ENCODE measurements at regions of chr5 and their contacts with region 1.

Region 1: DNA sequence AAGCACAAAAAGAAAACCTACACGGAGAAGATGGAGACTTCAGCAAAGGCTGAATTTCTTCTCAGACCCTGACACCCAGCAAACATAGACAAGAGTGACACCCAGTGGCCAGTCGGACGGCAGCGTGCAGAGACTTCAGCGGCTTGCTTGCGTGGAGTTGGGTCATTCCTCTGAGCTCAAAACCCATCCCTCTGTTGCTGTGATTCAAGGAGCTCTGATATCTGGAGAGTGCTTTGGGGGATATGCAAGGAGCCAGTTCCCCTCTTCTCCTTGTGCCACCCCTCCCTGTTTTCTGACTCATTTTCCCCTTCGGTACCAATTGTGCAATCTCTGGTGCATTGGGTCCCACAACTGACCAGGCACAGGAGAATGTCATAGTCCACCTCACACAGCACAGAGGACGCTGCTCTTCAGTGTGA is 27.5 kb downstream of the SH3TC2 start:
- DNase-seq: peak; percentile 83
- H3K4me3 Mint-ChIP-seq: no peak overlapping the region
- H3K27ac Mint-ChIP-seq: no peak overlapping the region
- H3K4me1 Mint-ChIP-seq: peaks cover 35% of the 10 kb centered on the region
- H3K27me3 Mint-ChIP-seq: no peaks in the 10 kb centered on the region

Region 2: DNA sequence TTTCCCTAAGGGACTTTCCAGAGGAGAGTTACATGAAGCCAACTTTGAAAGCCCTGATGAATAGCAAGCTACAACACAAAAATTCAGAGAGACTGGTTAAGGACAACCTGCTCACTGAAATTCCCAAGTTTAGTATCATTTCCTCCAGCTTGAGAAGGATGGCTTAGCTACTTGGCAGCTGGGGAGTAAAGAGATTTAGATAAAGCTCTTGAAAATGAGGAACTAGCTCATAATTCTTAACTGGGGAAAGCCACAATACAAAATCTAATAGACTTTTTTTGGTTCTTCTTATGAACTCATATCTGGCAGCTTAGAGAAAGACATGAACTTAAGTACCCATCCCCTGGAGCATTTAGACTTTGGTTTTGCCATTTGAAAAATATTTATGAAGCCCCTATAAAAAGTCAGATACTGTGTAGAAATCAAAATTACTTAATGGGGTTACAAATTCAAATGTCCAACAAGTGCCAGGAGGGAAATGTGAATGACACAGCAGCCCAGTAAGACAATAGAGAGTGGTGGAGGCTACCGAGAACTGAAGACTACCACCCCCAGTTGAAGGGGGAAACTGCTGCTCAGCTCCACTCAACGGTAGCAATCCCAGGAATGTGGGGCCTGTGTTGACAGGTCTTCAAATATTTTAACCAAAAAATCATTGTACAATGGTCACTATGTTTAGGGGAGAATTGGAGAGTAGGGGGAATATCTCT is 288.4 kb before region 1 on chr5:
- CTCF ChIA-PET with region 1: interaction called, 393 read pairs
- POLR2A ChIA-PET with region 1: no interaction called
- intact Hi-C with region 1: no loop called
- DNase-seq: no peak
- H3K4me3 Mint-ChIP-seq: no peak overlapping the region
- H3K27ac Mint-ChIP-seq: no peak overlapping the region
- H3K4me1 Mint-ChIP-seq: no peaks in the 10 kb centered on the region
- H3K27me3 Mint-ChIP-seq: no peaks in the 10 kb centered on the region

Region 3: DNA sequence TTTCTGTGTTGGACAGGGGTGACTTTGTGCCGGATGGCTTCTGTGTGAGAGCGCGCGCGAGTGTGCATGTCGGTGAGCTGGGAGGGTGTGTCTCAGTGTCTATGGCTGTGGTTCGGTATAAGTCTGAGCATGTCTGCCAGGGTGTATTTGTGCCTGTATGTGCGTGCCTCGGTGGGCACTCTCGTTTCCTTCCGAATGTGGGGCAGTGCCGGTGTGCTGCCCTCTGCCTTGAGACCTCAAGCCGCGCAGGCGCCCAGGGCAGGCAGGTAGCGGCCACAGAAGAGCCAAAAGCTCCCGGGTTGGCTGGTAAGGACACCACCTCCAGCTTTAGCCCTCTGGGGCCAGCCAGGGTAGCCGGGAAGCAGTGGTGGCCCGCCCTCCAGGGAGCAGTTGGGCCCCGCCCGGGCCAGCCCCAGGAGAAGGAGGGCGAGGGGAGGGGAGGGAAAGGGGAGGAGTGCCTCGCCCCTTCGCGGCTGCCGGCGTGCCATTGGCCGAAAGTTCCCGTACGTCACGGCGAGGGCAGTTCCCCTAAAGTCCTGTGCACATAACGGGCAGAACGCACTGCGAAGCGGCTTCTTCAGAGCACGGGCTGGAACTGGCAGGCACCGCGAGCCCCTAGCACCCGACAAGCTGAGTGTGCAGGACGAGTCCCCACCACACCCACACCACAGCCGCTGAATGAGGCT is 209.2 kb before region 1 on chr5 and contains the start of gene ADRB2:
- CTCF ChIA-PET with region 1: interaction called, 17 read pairs
- POLR2A ChIA-PET with region 1: no interaction called
- intact Hi-C with region 1: loop called (anchors 5 kb)
- DNase-seq: peak; percentile 93
- H3K4me3 Mint-ChIP-seq: peak within 1 kb of the TSS; percentile 80
- H3K27ac Mint-ChIP-seq: peak within 1 kb of the TSS; percentile 46
- H3K4me1 Mint-ChIP-seq: peaks cover 35% of the 10 kb centered on the region
- H3K27me3 Mint-ChIP-seq: peaks cover 7% of the 10 kb centered on the region
- total RNA-seq, gene ADRB2: 0.36 to 0.52 TPM

Region 4: DNA sequence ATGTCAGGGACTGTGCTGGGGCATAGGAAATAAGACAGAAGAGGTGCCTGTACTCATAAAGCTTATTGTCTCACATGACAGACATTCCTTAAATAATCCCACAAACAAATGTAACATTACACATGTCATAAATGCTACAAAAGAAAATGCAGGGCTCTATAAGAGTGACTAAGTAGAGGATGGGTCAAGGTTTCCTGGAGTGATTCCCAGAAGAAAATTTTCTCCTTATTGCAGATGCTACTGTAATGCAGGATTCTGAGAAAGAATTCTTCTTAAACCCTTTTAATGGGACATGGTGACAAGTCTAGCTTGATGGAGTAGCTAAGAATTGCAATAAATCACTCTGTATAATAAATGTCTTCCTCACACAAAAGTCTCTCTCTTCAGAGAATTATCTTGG is 28.2 kb before region 1 on chr5:
- CTCF ChIA-PET with region 1: interaction called, 19 read pairs
- POLR2A ChIA-PET with region 1: no interaction called
- intact Hi-C with region 1: loop called (anchors 5 kb)
- DNase-seq: no peak
- H3K4me3 Mint-ChIP-seq: no peak overlapping the region
- H3K27ac Mint-ChIP-seq: no peak overlapping the region
- H3K4me1 Mint-ChIP-seq: no peaks in the 10 kb centered on the region
- H3K27me3 Mint-ChIP-seq: no peaks in the 10 kb centered on the region

Region 5: GRCh38 chr5:149053072-149053695 is 17.8 kb after region 1 on chr5:
- CTCF ChIA-PET with region 1: interaction called, 10 read pairs
- POLR2A ChIA-PET with region 1: no interaction called
- intact Hi-C with region 1: no loop called
- DNase-seq: no peak
- H3K4me3 Mint-ChIP-seq: no peak overlapping the region
- H3K27ac Mint-ChIP-seq: no peak overlapping the region
- H3K4me1 Mint-ChIP-seq: no peaks in the 10 kb centered on the region
- H3K27me3 Mint-ChIP-seq: peaks cover 2% of the 10 kb centered on the region

Region 6: DNA sequence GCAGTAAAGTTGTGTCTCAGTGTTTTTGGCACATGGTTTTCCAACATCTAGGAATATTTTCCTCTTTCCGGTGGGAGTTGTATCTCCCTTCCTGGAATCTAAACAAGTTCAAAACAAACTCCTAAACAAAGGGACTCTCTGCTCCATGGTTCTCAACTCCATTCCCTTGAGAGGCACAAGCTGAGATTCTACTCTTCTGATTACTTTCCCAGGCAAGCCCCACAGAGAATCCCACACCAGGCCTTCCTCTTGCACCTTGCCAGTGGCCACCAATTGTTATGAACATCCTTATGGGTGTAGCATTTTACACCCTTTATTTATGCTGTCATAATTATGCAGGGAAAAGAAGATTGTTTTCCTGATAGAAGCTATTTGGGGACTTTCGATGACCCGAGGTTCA is 53.3 kb after region 1 on chr5:
- CTCF ChIA-PET with region 1: no interaction called
- POLR2A ChIA-PET with region 1: no interaction called
- intact Hi-C with region 1: no loop called
- DNase-seq: no peak
- H3K4me3 Mint-ChIP-seq: no peak overlapping the region
- H3K27ac Mint-ChIP-seq: no peak overlapping the region
- H3K4me1 Mint-ChIP-seq: no peaks in the 10 kb centered on the region
- H3K27me3 Mint-ChIP-seq: peaks cover 5% of the 10 kb centered on the region

Region 7: GRCh38 chr5:149549461-149550267 is 514.3 kb after region 1 on chr5:
- CTCF ChIA-PET with region 1: no interaction called
- POLR2A ChIA-PET with region 1: no interaction called
- intact Hi-C with region 1: no loop called
- DNase-seq: peak; percentile 66
- H3K4me3 Mint-ChIP-seq: peak overlapping the region; percentile 97
- H3K27ac Mint-ChIP-seq: peak overlapping the region; percentile 99
- H3K4me1 Mint-ChIP-seq: peaks cover 50% of the 10 kb centered on the region
- H3K27me3 Mint-ChIP-seq: no peaks in the 10 kb centered on the region